ENCODE measurements at regions of chr14 and their contacts with region 1.

Region 1: GRCh38 chr14:73713803-73714655 is at the start of gene PNMA1:
- DNase-seq: peak; percentile 84 to 87 (median 85)
- H3K4me3 ChIP-seq: peak within 1 kb of the TSS; percentile 92 to 96
- H3K4me3 Mint-ChIP-seq: peak within 1 kb of the TSS; percentile 89 to 100 (median 98)
- H3K27ac ChIP-seq: peak within 1 kb of the TSS; percentile 80
- H3K27ac Mint-ChIP-seq: peak within 1 kb of the TSS; percentile 89 to 99 (median 95)
- H3K4me1 ChIP-seq: peaks cover 26% of the 10 kb centered on the region
- H3K4me1 Mint-ChIP-seq: peaks cover 18 to 35% (median 24%) of the 10 kb centered on the region in 4 donors
- H3K27me3 ChIP-seq: no peaks in the 10 kb centered on the region
- H3K27me3 Mint-ChIP-seq: no peaks in the 10 kb centered on the region
- total RNA-seq, gene PNMA1: 53.3 to 59.3 TPM

Region 2: DNA sequence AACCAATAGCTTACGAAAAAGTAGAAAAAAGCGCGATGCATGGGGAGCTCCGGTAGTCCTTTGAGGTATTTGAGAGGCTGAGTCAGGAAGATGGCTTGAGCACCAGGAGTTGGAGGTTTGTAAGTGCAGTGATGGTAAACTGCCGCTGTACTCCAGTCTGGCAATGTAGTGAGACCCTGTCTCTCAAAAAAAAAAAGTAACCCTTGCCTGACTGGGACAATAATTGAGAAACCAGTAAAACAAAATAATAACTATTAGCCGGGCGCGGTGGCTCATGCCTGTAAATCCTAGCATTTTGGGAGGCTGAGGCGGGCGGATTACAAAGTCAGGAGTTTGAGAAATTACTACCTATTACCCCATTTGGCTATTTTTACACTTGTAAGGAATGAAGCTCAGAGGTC is 145.6 kb before region 1 on chr14:
- CTCF ChIA-PET with region 1: interaction called, 3 read pairs
- POLR2A ChIA-PET with region 1: interaction called, 13 read pairs
- intact Hi-C with region 1: no loop called
- DNase-seq: peak in 3 of 5 donors; percentile 3 to 55 (median 6)
- H3K4me3 ChIP-seq: peak overlapping the region; percentile 28 to 63
- H3K4me3 Mint-ChIP-seq: peak overlapping the region; percentile 81 to 96 (median 94)
- H3K27ac ChIP-seq: peak overlapping the region; percentile 72
- H3K27ac Mint-ChIP-seq: peak overlapping the region; percentile 91 to 98 (median 95)
- H3K4me1 ChIP-seq: peaks cover 46% of the 10 kb centered on the region
- H3K4me1 Mint-ChIP-seq: peaks cover 27 to 55% (median 42%) of the 10 kb centered on the region in 4 donors
- H3K27me3 ChIP-seq: no peaks in the 10 kb centered on the region
- H3K27me3 Mint-ChIP-seq: no peaks in the 10 kb centered on the region

Region 3: GRCh38 chr14:73644531-73645247 is 69.3 kb before region 1 on chr14 and contains the start of gene DNAL1:
- CTCF ChIA-PET with region 1: no interaction called
- POLR2A ChIA-PET with region 1: interaction called, 12 read pairs
- intact Hi-C with region 1: loop called (anchors 1 kb)
- DNase-seq: peak; percentile 88 to 90 (median 89)
- H3K4me3 ChIP-seq: peak within 1 kb of the TSS; percentile 73 to 81
- H3K4me3 Mint-ChIP-seq: peak within 1 kb of the TSS; percentile 89 to 99 (median 95)
- H3K27ac ChIP-seq: peak within 1 kb of the TSS; percentile 64
- H3K27ac Mint-ChIP-seq: peak within 1 kb of the TSS; percentile 76 to 97 (median 97)
- H3K4me1 ChIP-seq: peaks cover 11% of the 10 kb centered on the region
- H3K4me1 Mint-ChIP-seq: peaks cover 11 to 19% (median 17%) of the 10 kb centered on the region in 4 donors
- H3K27me3 ChIP-seq: no peaks in the 10 kb centered on the region
- H3K27me3 Mint-ChIP-seq: no peaks in the 10 kb centered on the region
- total RNA-seq, gene DNAL1: 5.4 to 7.8 TPM

Region 4: DNA sequence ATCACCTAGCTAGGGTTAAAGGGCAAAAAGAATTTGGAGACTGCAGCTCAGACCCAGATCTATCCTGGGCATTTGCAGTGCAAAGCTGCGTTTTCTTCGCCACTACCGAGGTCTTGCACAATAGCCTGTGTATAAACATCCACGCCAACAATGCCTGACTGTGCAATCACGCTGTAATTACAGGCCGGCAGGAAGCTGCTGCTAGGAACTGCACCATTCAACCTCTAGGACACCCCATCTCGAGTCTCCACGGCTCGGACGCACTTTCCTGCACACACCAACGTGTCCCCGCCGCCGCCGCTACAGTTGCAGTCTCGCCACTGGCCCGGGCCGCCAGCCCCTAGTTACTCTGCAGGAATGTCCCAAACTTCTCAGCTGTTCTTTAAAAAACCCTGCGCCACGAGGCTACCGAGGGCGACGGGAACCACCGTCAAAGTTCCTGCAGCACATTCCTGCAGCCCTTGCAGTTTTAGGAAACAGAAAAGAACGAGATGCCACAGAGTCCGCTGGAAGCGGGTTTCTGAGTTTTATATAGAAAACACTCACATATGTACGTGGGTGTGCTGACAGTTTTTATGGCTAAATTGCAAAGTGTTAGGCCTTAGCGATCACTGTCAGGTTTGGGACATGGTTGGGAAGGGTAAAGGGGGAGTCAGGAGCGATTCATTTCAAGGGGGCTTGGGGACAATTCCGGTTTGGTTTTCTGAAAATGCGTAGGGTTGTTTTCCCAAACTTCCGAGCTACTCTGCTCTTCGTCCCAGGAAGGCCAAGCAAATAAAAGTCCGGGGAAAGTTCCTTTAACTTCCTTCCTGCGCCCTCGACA is 72.1 kb after region 1 on chr14:
- CTCF ChIA-PET with region 1: interaction called, 14 read pairs
- POLR2A ChIA-PET with region 1: interaction called, 57 read pairs
- intact Hi-C with region 1: loop called (anchors 5 kb)
- DNase-seq: peak; percentile 62 to 84 (median 64)
- H3K4me3 ChIP-seq: peak overlapping the region; percentile 89 to 90
- H3K4me3 Mint-ChIP-seq: peak overlapping the region; percentile 94 to 98 (median 96)
- H3K27ac ChIP-seq: peak overlapping the region; percentile 84
- H3K27ac Mint-ChIP-seq: peak overlapping the region; percentile 95 to 99 (median 97)
- H3K4me1 ChIP-seq: peaks cover 62% of the 10 kb centered on the region
- H3K4me1 Mint-ChIP-seq: peaks cover 53 to 72% (median 61%) of the 10 kb centered on the region in 4 donors
- H3K27me3 ChIP-seq: no peaks in the 10 kb centered on the region
- H3K27me3 Mint-ChIP-seq: no peaks in the 10 kb centered on the region

Region 5: DNA sequence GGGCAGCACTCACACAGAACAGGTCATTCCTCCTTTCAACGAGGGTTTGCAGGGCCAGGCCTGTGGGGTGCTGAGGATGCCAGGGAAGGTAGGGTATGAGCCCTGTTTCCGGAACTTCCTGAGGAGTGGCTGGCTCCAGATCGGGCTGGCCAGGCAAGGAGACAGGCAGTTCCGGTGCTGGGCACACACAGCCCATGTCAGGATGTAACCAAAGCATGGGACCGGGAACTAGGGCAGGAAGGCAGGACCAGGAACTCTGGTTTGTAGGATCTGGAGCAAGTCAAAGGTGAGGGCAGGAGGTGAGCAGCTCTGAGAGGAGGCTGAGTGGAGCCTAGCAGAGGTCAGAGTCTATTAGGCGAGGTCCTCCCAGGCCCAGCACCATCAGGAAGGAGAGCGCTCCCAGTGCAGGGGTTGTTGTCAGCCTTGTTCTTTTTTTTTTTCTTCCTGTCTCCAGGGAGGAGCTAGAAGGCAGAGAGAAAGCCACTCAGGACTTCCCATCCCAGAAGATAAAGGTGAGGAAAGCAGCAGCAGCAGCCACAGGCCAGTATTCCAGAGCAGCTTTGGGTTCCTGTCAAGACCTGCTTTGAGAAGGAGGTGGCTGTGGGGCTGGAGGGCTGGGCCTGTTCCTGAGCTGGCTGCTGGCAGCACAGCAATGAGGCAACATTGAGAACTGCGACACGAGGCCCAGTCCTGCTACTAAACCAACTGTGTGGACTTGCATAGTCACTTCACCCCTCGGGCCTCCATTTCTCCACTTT is 88.6 kb after region 1 on chr14:
- CTCF ChIA-PET with region 1: no interaction called
- POLR2A ChIA-PET with region 1: no interaction called
- intact Hi-C with region 1: no loop called
- DNase-seq: no peak
- H3K4me3 ChIP-seq: no peak overlapping the region
- H3K4me3 Mint-ChIP-seq: no peak overlapping the region
- H3K27ac ChIP-seq: no peak overlapping the region
- H3K27ac Mint-ChIP-seq: peak overlapping the region in 2 of 7 donors; percentile 14 to 63
- H3K4me1 ChIP-seq: no peaks in the 10 kb centered on the region
- H3K4me1 Mint-ChIP-seq: no peaks in the 10 kb centered on the region
- H3K27me3 ChIP-seq: no peaks in the 10 kb centered on the region
- H3K27me3 Mint-ChIP-seq: no peaks in the 10 kb centered on the region

Region 6: DNA sequence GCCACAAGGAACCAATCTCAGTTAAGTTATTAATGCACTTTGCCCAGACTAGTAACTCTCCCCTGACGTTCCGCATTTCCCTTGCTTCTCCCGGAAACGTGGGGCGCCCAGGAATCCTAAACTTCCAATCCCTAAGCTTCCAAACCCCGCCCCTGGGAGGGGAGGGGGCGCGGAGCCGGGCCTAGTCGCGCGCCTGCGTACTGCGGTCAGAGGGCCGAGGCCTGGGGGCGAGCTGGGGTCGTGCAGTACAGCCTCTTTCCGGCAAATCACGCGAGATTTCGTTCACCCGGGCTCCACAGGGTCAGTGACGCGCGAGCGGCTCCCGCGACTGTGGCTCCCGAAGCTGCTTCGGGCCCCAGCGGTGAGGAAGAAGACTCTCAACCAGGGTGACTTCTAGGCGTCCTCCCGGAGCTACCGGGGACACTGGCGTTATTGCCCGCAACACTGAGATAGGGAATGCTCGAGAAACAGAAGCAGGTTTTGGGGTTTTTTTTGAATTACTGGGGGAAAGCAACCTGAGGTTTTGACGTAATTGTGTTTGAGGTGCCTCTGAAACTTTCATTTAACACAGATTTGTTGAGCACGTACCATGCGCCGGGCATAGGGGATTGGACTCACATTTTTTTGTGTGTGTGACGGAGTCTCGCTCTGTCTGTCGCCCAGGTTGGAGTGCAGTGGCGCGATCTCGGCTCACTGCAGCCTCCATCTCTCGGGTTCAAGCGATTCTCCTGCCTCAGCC is 137.8 kb after region 1 on chr14 and contains the start of gene PTGR2:
- CTCF ChIA-PET with region 1: no interaction called
- POLR2A ChIA-PET with region 1: interaction called, 14 read pairs
- intact Hi-C with region 1: no loop called
- DNase-seq: peak; percentile 88 to 93 (median 91)
- H3K4me3 ChIP-seq: peak within 1 kb of the TSS; percentile 42 to 91
- H3K4me3 Mint-ChIP-seq: peak within 1 kb of the TSS; percentile 92 to 99 (median 94)
- H3K27ac ChIP-seq: peak within 1 kb of the TSS; percentile 66
- H3K27ac Mint-ChIP-seq: peak within 1 kb of the TSS; percentile 93 to 99 (median 98)
- H3K4me1 ChIP-seq: peaks cover 17% of the 10 kb centered on the region
- H3K4me1 Mint-ChIP-seq: peaks cover 9 to 24% (median 17%) of the 10 kb centered on the region in 4 donors
- H3K27me3 ChIP-seq: no peaks in the 10 kb centered on the region
- H3K27me3 Mint-ChIP-seq: no peaks in the 10 kb centered on the region
- total RNA-seq, gene PTGR2: 4.5 to 5.0 TPM

Measured in CD4-positive, alpha-beta memory T cell (primary cell).